Panc1 (cell line): ENCODE measurements at regions of chr1 and their contacts with region 1.

Region 1: DNA sequence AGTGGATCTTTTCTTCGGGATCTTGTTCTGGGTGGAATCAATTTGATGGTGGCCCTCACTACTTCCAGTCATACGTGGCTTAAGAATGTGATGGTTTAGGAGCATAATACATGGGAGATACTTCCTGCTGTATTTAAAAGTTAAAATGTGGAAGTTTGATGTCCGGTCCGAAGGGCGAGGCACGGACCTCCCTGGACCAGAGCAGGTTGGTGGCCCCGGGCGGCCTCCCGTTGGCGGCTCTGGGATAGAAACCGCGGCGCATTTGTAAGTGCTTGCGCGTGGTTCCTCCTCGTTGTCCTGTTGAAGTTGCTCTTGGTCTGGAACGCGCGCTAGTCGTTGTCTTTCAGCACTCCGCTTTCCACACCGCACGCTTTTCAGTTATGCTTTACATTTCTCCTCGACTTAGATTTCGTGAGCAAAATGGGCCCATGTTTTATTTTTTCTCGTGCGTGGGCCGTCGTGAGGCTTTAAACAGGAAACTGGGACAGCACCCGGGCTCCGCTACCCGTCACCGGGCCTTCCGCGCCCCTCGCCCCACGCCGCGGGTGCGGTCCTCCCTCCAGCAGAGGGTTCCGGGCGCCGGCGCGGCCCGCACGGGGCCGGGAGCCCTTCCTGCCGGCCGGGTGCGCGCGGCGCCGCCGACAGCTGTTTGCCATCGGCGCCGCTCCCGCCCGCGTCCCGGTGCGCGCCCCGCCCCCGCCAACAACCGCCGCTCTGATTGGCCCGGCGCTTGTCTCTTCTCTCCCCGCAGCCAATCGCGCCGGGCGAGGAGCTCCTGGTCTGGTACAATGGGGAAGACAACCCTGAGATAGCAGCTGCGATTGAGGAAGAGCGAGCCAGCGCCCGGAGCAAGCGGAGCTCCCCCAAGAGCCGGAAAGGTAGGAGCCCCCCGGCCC is 48.9 kb downstream of the PRDM2 start:
- DNase-seq: no peak
- ATAC-seq: peak; percentile 98
- H3K4me3 ChIP-seq: peak overlapping the region; percentile 83 to 91
- H3K27ac ChIP-seq: peak overlapping the region; percentile 96
- H3K4me1 ChIP-seq: peaks cover 25% of the 10 kb centered on the region
- H3K27me3 ChIP-seq: no peaks in the 10 kb centered on the region
- CTCF ChIP-seq: peak; percentile 48

Region 2: DNA sequence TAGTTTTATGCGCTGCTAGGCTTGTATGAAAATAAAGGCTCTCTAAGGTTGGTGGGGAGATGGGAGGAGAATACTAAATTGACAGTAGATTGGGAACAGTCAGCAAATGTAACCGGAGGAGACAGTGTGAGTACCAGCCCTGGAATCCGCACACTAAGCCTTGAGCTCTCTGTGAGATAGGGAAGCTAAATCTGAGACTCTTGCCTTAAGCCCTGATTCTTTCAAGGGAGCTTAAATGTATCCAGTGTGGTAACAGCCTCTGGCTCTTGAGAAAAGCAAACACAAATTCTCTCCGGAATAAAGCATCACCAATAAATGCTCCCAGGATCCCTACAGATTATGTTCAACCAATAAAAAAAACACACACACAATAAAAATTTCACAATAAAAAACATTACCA is 198.2 kb before region 1 on chr1:
- CTCF ChIA-PET with region 1: no interaction called
- POLR2A ChIA-PET with region 1: no interaction called
- in situ Hi-C with region 1: no loop called
- intact Hi-C with region 1: no loop called
- DNase-seq: no peak
- ATAC-seq: no peak
- H3K4me3 ChIP-seq: no peak overlapping the region
- H3K27ac ChIP-seq: no peak overlapping the region
- H3K4me1 ChIP-seq: no peaks in the 10 kb centered on the region
- H3K27me3 ChIP-seq: no peaks in the 10 kb centered on the region
- CTCF ChIP-seq: no peak

Region 3: DNA sequence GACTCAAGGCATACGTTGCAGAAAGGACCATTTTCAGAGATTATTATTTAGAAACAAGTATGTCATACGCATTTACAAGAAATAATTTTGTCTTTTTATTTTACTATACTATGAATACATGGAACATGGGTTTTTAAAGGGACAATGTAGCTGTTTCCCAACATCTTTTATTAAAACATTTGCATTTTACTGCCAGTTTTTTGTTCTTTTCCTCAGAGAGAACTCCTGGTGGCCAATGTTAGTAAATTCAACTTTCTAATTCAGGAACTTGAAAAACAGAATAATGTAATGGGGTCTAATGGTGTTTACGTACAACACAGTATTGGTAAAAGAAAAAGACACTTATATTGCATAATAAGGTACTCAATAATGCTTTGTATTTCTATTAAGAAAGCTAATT is 34.0 kb before region 1 on chr1:
- CTCF ChIA-PET with region 1: interaction called, 13 read pairs
- POLR2A ChIA-PET with region 1: interaction called, 14 read pairs
- in situ Hi-C with region 1: no loop called
- intact Hi-C with region 1: no loop called
- DNase-seq: no peak
- ATAC-seq: no peak
- H3K4me3 ChIP-seq: no peak overlapping the region
- H3K27ac ChIP-seq: no peak overlapping the region
- H3K4me1 ChIP-seq: no peaks in the 10 kb centered on the region
- H3K27me3 ChIP-seq: no peaks in the 10 kb centered on the region
- CTCF ChIP-seq: peak; percentile 9; the same call in 1 of the 2 replicates

Region 4: GRCh38 chr1:13732971-13733667 is 15.7 kb before region 1 on chr1:
- CTCF ChIA-PET with region 1: no interaction called
- POLR2A ChIA-PET with region 1: no interaction called
- in situ Hi-C with region 1: no loop called
- intact Hi-C with region 1: no loop called
- DNase-seq: no peak
- ATAC-seq: no peak
- H3K4me3 ChIP-seq: no peak overlapping the region
- H3K27ac ChIP-seq: no peak overlapping the region
- H3K4me1 ChIP-seq: no peaks in the 10 kb centered on the region
- H3K27me3 ChIP-seq: no peaks in the 10 kb centered on the region
- CTCF ChIP-seq: no peak